Activated CD4-positive, alpha-beta T cell treated with anti-CD3 and anti-CD28 coated beads for 36 hours (primary cell): ENCODE measurements at regions of chr10 and their contacts with region 1.

Region 1: DNA sequence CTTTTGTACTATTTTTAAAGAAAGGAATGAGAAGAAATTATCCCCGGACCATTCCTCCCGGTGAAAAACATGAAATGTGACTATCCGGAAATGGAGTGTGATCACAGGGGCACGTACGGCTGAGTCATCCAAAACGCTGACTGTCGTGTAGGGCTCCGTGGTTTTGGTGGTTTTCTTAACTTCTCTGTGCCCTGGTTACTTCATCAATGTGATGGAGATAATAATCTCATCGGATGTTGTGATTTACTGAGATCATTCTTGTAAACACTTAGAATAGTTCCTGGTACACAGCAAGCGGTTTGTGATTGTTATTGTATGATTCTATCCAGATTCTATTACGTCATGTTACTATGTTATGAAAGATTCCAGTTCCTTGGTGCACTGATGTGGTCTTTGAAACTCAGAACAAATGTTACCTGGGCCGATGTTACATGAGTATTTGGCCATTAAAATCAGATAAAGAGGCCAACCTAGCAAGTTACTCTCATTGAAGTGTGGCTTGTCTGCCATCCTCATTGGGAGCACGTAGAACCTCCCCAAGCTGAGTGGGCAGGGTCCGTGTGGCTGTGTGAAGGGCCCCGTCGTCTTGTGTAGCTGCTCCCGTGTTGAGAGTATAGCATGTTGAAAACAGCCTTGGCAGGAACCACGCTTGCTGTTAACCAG is 99.5 kb downstream of the CAMK1D start:
- DNase-seq: peak; percentile 86
- ATAC-seq: peak; percentile 94
- H3K4me3 Mint-ChIP-seq: peak overlapping the region; percentile 68
- H3K27ac Mint-ChIP-seq: peak overlapping the region; percentile 92
- H3K4me1 Mint-ChIP-seq: peaks cover 43% of the 10 kb centered on the region
- H3K27me3 Mint-ChIP-seq: no peaks in the 10 kb centered on the region

Region 2: GRCh38 chr10:12264204-12264940 is 184.5 kb before region 1 on chr10:
- CTCF ChIA-PET with region 1: interaction called, 3 read pairs
- POLR2A ChIA-PET with region 1: no interaction called
- intact Hi-C with region 1: loop called in 1 of 2 experiments (anchors 2 kb)
- DNase-seq: peak; percentile 88
- ATAC-seq: peak; percentile 93
- H3K4me3 Mint-ChIP-seq: peak overlapping the region; percentile 42
- H3K27ac Mint-ChIP-seq: peak overlapping the region; percentile 83
- H3K4me1 Mint-ChIP-seq: peaks cover 17% of the 10 kb centered on the region
- H3K27me3 Mint-ChIP-seq: no peaks in the 10 kb centered on the region

Region 3: GRCh38 chr10:12381536-12382156 is 67.2 kb before region 1 on chr10:
- CTCF ChIA-PET with region 1: no interaction called
- POLR2A ChIA-PET with region 1: no interaction called
- intact Hi-C with region 1: loop called in 1 of 2 experiments (anchors 2 kb)
- DNase-seq: no peak
- ATAC-seq: peak; percentile 73
- H3K4me3 Mint-ChIP-seq: no peak overlapping the region
- H3K27ac Mint-ChIP-seq: peak overlapping the region; percentile 86
- H3K4me1 Mint-ChIP-seq: peaks cover 33% of the 10 kb centered on the region
- H3K27me3 Mint-ChIP-seq: no peaks in the 10 kb centered on the region

Region 4: DNA sequence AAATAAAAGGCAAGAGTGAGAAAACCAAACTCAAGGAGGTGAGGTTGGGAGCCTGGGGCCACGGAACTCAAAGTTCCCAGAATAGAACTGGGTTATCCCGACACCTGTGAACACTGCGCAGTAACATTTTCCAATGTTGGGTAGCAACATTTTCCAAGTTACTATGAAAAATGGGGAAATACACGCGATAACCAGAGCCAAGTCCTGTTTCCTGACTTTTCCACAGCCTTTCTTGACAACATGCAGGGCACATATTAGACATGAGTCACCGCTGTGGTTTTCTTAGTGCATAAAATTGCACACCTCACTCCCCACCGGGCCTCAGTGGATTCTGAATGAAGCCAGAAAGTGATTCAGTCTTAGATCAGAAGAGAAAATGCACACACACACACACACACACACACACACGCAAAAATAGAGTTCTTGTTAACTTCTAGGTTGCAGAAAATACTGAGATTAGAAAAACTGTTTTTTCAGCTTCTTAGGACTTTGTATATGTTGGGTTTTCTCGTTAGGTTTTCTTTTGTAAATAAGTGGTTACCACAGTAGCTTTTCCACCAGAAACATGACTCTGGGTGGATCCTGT is 29.5 kb before region 1 on chr10:
- CTCF ChIA-PET with region 1: no interaction called
- POLR2A ChIA-PET with region 1: no interaction called
- intact Hi-C with region 1: loop called (anchors 1 kb)
- DNase-seq: peak; percentile 88
- ATAC-seq: peak; percentile 98
- H3K4me3 Mint-ChIP-seq: peak overlapping the region; percentile 30
- H3K27ac Mint-ChIP-seq: peak overlapping the region; percentile 73
- H3K4me1 Mint-ChIP-seq: peaks cover 36% of the 10 kb centered on the region
- H3K27me3 Mint-ChIP-seq: no peaks in the 10 kb centered on the region

Region 5: GRCh38 chr10:12729885-12730284 is 281.0 kb after region 1 on chr10:
- CTCF ChIA-PET with region 1: no interaction called
- POLR2A ChIA-PET with region 1: no interaction called
- intact Hi-C with region 1: loop called in 1 of 2 experiments (anchors 5 kb)
- DNase-seq: peak; percentile 46
- ATAC-seq: no peak
- H3K4me3 Mint-ChIP-seq: no peak overlapping the region
- H3K27ac Mint-ChIP-seq: no peak overlapping the region
- H3K4me1 Mint-ChIP-seq: peaks cover 14% of the 10 kb centered on the region
- H3K27me3 Mint-ChIP-seq: no peaks in the 10 kb centered on the region